ENCODE measurements at regions of chrX and their contacts with region 1.

Region 1: GRCh38 chrX:16436348-16437188 is 213.4 kb upstream of the S100G start:
- DNase-seq: peak; percentile 40
- H3K4me3 ChIP-seq: no peak overlapping the region
- H3K27ac ChIP-seq: no peak overlapping the region
- H3K4me1 ChIP-seq: no peaks in the 10 kb centered on the region
- H3K27me3 ChIP-seq: no peaks in the 10 kb centered on the region
- CTCF ChIP-seq: peak; percentile 78 to 83 (median 79)

Region 2: DNA sequence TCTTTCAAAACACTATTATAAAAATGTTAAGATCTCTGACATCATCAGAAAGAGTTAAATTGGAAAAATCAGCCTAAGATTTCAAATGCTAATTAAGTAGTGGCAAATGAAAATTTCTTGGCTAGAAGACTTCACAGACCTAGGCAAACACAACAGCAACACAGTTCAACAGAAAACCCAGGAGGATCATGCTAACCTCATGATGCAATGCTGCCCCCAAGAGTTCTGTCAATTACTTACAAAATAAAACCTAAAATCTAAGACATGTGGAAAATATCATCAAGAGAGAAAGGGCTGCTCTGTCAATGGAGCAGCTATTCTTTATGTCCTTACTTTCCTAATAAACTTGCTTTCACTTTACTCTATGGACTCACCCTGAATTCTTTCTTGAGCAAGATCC is 234.4 kb after region 1 on chrX:
- dilution Hi-C with region 1: loop called (anchors 25 kb)
- DNase-seq: no peak
- H3K4me3 ChIP-seq: no peak overlapping the region
- H3K27ac ChIP-seq: no peak overlapping the region
- H3K4me1 ChIP-seq: no peaks in the 10 kb centered on the region
- H3K27me3 ChIP-seq: no peaks in the 10 kb centered on the region
- CTCF ChIP-seq: peak; percentile 20 to 55 (median 43)